ENCODE measurements at regions of chr16 and their contacts with region 1.

Region 1: GRCh38 chr16:67393035-67393787 is at the start of gene TPPP3:
- DNase-seq: peak; percentile 94
- ATAC-seq: peak; percentile 82
- total RNA-seq, gene TPPP3: 8.9 TPM

Region 2: GRCh38 chr16:67260426-67261075 is 132.7 kb before region 1 on chr16:
- intact Hi-C with region 1: loop called (anchors 10 kb)
- DNase-seq: no peak
- ATAC-seq: peak; percentile 84

Region 3: DNA sequence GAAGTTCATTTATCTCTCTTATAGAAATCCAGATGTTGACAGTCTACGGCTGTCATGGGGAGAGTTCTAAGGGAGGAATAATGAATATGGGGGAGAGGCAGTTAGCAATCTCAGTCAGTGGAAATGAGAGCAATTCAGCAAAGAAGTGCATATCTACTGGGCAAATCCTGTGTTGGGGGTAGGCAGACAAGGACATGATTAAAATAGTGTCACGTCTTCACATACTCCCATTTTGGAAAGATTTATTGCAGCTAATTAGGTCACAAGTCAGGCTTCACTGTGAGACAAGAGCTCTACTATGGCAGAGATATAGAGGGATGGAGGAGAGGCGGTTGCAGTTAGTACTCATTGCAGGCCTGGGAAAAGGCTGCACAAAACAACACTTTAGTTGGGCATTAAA is 36.8 kb before region 1 on chr16:
- intact Hi-C with region 1: no loop called
- DNase-seq: no peak
- ATAC-seq: no peak

Region 4: DNA sequence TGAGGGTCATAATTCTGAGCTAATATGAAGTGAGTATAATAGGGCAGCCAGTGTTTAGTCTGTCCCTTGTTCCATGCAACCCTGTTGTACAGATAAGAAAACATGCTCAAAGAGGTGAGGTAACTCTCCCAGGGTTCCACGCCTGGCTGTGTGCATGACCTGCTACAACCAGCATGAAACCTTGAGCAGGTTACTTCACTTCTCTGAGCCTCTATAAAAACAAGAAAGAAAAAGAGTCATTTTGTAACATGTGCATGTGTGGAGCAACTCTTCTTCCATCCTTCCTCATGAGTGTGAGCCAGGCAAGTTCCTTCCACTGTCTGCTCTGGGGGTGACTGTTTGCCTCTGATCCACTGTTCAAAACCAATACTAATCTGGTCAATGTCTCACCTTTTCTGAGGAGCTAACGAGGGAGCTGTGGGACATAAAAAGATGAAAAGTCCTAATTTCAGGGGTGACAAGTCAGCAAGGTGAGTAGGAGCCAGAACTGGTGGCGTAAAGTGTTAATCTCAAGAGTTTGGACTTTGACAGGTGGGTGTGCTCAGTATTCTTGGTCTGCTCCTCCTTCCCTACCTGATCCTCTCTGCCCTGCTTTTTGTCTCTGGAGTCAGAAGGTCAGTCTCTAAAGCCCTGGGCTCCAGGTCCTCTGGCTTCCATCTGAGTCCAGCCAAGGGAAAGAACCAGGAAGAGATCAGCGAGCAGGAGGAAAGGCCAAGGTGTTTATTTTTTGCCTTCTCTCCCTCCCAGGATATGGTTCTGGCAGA is 304.4 kb after region 1 on chr16:
- intact Hi-C with region 1: no loop called
- DNase-seq: no peak
- ATAC-seq: no peak

Region 5: DNA sequence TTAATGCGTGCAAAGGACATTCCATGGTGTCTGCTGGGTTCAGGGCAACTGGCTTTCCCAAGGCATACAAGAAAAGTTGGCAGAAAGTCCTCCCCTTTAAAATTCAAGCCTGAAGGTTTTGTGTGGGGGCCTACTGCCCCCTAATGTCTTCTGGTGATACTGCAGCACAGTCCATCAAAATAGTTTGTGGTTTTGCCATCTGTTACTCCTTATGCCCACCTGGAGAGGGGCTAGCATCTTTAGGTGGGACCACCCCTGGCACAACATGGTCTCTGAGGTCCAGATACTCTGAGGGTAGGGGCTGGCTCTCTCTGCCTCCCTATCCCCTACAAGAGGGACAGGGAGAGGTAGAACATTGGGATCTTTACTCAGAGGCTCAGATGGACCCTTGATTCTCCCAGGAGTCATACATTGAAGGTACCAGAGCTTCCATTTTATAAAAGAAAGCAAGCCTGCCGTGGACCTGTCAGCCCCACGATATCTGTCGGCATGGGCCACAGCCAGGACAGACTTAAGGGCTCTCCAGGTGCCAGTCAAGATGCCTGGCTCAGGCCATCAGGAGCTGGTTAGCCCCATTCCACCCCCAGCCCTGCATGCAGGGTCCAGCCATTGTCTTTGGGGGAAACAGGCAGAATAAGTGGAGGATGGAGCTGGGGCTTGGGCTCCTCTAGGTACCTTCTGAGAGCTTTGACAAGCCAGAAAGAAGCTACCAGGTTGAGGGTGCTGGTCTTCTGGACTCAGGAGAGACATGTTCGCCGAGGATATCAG is 836.4 kb after region 1 on chr16:
- intact Hi-C with region 1: no loop called
- DNase-seq: no peak
- ATAC-seq: peak; percentile 56

Measured in Right ventricle myocardium superior (tissue), 1 donor.